ENCODE measurements at regions of chr4 and their contacts with region 1.

Region 1: GRCh38 chr4:122508083-122508482 is 51.6 kb upstream of the IL2 start:
- DNase-seq: no peak
- H3K4me3 Mint-ChIP-seq: peak overlapping the region; percentile 71
- H3K27ac Mint-ChIP-seq: peak overlapping the region; percentile 89
- H3K4me1 Mint-ChIP-seq: peaks cover 69% of the 10 kb centered on the region
- H3K27me3 Mint-ChIP-seq: no peaks in the 10 kb centered on the region

Region 2: GRCh38 chr4:122458625-122459024 is 49.5 kb before region 1 on chr4:
- intact Hi-C with region 1: loop called (anchors 1 kb)
- DNase-seq: peak; percentile 29
- H3K4me3 Mint-ChIP-seq: peak overlapping the region; percentile 76
- H3K27ac Mint-ChIP-seq: peak overlapping the region; percentile 87
- H3K4me1 Mint-ChIP-seq: peaks cover 46% of the 10 kb centered on the region
- H3K27me3 Mint-ChIP-seq: no peaks in the 10 kb centered on the region

Region 3: DNA sequence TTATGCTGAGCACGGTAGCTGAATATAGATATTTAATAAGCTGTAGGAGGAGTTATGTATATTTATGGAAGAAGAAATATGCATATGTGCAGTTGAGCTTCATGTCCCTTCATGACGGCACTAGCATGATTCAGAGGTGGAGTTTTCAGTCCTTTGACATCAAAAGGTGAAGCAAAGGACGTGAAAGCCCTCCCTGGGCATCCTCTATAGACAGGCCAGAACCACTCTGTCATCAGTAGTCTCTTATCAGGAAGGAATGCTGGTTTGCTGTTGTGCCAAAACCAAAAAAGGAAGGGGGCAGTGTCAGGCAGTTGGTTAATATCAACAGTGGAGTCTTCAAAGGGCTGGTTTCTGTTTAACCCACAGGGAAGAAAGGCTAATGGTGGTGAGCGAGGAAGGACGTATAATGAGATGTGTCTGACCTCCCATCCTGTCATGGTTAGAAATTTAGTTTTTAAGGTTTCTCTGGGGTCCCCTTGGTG is 28.1 kb before region 1 on chr4:
- intact Hi-C with region 1: no loop called
- DNase-seq: no peak
- H3K4me3 Mint-ChIP-seq: no peak overlapping the region
- H3K27ac Mint-ChIP-seq: no peak overlapping the region
- H3K4me1 Mint-ChIP-seq: no peaks in the 10 kb centered on the region
- H3K27me3 Mint-ChIP-seq: no peaks in the 10 kb centered on the region

Region 4: DNA sequence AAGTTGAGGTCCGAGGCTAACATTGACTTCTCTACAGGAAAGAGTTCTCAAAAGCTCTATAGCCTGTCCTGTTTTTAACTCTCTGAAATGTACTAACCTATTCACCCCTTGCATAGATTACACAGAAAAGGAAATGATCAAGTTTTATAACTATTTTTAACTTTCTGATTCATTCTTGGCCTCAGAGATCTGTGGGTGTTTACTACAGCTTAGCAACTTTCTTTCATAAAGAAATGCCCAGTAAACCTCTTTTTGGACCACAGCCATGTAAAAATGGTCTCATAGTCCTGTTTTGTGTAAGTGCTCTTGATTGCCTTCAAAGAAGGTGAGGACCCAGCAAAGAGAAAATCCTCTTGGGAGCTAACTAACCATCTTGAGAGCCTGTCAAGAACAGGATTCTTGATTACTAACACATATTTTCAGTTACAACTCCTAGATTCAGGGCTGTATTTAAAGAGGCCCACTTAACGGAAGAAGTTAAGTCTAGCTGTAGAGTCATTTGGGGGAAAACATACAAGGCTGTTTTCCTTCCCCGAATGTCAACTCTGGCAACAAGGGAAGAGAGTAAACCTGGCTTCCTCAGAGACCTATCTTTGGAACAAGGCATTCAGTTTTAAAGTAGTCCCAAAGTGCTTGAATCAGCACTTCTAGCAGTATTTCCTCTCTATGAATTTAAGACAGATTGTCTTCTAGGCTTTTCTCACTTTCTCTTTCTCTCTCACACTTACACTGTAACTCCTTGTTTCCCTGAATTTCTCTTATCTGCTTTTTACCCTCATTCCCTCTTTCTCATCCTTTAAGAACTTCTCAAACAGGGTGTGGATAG is 34.5 kb after region 1 on chr4:
- intact Hi-C with region 1: loop called (anchors 1 kb)
- DNase-seq: no peak
- H3K4me3 Mint-ChIP-seq: peak overlapping the region; percentile 71
- H3K27ac Mint-ChIP-seq: peak overlapping the region; percentile 93
- H3K4me1 Mint-ChIP-seq: peaks cover 85% of the 10 kb centered on the region
- H3K27me3 Mint-ChIP-seq: no peaks in the 10 kb centered on the region

Region 5: DNA sequence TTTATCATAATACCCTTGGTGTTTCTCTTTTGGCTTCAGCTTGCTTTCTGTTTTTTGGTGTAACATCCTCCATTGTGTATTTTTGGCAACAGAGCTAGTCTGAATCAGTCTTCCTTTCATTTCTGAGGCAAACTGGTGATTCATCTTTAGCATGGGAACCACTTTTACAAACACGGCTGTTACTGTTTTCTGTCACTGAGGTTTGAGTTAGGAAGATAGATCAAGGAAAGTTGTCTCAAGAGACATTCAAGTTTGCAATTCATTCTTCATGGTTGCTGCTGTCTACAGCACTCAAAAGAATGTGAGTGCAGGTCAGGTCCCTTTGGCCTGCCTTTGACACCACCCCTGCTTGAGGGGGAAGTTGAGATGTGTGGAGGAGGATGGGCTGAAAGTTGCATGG is 76.4 kb after region 1 on chr4:
- intact Hi-C with region 1: no loop called
- DNase-seq: peak; percentile 38
- H3K4me3 Mint-ChIP-seq: peak overlapping the region; percentile 62
- H3K27ac Mint-ChIP-seq: peak overlapping the region; percentile 94
- H3K4me1 Mint-ChIP-seq: peaks cover 70% of the 10 kb centered on the region
- H3K27me3 Mint-ChIP-seq: peaks cover 3% of the 10 kb centered on the region

Region 6: DNA sequence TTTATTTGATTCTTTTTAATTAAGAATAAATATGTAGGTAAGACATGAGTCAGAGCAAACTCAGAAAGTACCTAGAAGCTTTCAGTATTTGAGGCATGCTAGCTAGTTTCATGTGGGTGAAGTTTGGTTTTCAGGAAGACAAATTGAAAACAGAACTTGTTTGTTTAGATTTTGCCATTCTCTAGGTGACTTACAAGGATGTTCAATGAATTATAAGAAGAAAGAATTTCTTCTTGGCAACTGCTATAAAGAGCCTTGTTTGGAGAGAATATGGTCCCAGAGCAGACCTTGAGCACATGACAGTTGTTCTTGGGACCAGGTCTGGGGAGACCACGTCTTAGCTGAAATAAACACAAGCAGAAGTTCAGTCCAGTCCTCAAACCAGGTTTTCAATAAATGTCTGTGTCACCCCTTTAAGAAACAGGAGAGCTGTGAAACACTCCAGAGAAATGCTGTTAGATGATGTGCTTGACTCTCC is 150.8 kb after region 1 on chr4:
- intact Hi-C with region 1: loop called (anchors 2 kb)
- DNase-seq: no peak
- H3K4me3 Mint-ChIP-seq: peak overlapping the region; percentile 66
- H3K27ac Mint-ChIP-seq: peak overlapping the region; percentile 94
- H3K4me1 Mint-ChIP-seq: peaks cover 59% of the 10 kb centered on the region
- H3K27me3 Mint-ChIP-seq: no peaks in the 10 kb centered on the region

Measured in activated T-helper 1 cell treated with anti-CD3 and anti-CD28 coated beads, Interleukin-12 subunit alpha, Interleukin-12 subunit beta, Interleukin-2, Interleukin-4 antibody, amounts not matched to agents 30 ng/mL and 10 ng/mL and 1 ng/mL, durations not matched to agents 14 hours and 24 hours and 36 hours (primary cell).